Lower lobe of right lung (tissue), 2 donors: ENCODE measurements at regions of chr19 and their contacts with region 1.

Region 1: DNA sequence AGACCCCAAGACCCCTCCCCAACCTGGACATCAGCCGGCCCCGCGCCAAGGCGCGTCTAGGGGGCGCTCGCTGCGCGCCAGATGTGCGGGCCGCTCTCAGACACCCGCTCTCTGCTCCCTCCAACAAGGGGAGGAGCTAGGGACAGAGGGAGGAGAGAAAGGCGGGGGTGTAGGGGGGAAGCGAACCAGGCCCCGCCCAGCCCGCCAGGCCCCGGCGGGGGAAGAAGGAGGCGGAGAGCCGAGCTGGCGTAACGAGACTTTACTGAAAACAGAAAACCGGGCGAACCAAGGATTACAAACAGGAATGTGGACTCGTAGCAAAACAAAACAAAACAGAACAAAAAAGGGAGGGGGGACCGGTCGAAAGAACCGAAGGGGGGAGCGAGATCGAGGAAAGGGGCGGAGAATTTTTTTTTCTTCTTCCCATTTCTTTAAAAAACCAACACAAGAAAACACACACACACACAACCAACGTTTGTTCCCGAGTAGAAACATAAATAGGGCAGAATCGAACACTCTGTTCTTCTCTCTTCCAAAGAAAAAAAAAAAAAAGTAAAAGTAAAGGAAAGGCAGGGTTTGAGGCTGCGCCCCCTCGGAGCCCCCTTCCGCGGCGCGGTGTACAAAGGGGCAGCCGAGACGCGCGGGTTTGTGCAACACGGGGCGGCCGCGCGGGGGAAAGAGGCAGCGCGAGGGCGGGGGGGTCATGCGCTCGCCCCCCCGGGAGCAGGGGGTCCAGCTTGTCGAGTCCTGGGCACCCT is 1.7 kb downstream of the JUND start:
- DNase-seq: peak; percentile 94
- ATAC-seq: peak; percentile 70 to 77
- H3K4me3 ChIP-seq: peak overlapping the region; percentile 97
- H3K27ac ChIP-seq: peak overlapping the region; percentile 100
- H3K4me1 ChIP-seq: peaks cover 55% of the 10 kb centered on the region
- H3K27me3 ChIP-seq: no peaks in the 10 kb centered on the region
- CTCF ChIP-seq: peak; percentile 31

Region 2: DNA sequence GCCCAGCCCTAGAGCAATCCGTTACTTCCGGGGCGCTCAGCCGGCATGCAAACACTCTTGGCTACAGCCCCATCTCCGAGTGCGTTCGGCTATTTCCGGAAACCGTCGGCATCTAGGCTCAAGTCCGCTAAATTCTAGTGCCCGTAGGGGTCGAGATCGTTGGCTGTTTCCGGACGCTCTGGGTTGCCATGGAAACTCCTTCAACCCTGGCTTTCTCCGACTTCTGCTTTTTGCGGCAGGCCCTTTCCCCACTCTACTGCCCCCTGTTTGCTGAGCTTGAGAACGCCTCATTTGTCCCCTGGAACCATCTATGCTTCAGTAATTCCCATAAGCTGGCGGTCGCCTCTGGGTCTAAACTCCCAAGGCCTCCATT is 127.3 kb before region 1 on chr19:
- intact Hi-C with region 1: no loop called
- DNase-seq: peak; percentile 97
- ATAC-seq: peak; percentile 82 to 84
- H3K4me3 ChIP-seq: peak overlapping the region; percentile 83
- H3K27ac ChIP-seq: peak overlapping the region; percentile 95
- H3K4me1 ChIP-seq: peaks cover 42% of the 10 kb centered on the region
- H3K27me3 ChIP-seq: no peaks in the 10 kb centered on the region
- CTCF ChIP-seq: peak; percentile 57

Region 3: GRCh38 chr19:18322759-18323460 is 43.2 kb after region 1 on chr19 and contains the start of gene LSM4:
- intact Hi-C with region 1: loop called (anchors 10 kb)
- DNase-seq: peak; percentile 99
- ATAC-seq: peak; percentile 96 to 98
- H3K4me3 ChIP-seq: peak within 1 kb of the TSS; percentile 88
- H3K27ac ChIP-seq: peak within 1 kb of the TSS; percentile 86
- H3K4me1 ChIP-seq: peaks cover 59% of the 10 kb centered on the region
- H3K27me3 ChIP-seq: no peaks in the 10 kb centered on the region
- CTCF ChIP-seq: peak; percentile 17
- total RNA-seq, gene LSM4: 72.3 TPM